Caco-2 (cell line): ENCODE measurements at regions of chr19 and their contacts with region 1.

Region 1: DNA sequence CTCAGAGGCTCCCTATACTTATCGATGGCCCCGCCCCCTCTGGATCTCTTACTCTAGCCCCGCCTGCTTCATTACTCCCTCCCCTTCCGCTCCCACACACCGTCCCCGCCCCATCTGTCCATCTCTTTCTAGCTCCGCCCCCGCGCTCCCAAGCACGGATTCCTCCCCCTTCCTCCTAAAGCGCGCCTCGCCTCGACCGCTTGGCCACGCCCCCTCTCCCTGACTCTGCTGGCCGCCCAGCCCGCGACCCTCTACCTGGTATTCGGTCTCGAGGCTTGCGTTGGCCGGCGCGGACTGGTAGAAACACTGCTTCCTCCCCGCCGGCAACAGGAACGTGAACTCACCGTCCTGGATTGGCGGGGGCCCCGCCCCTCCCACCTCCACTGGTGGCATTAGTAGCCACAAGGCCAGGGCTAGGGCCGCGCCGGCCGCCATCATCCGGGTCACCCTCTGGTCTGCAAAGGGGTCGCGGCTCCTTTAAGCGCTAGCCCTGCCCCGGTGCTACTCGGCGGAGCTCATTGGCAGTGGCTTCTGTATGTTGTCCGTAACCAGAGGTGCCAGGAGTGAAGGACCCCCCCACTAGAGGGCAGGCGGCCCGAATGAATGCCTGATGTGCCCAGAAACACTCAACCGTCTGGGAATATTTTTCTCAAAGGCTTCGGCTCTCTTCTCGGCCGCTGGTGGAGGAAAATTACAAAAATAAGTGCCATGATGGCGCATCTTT is at the start of gene TMED1:
- DNase-seq: peak; percentile 99 to 100
- H3K4me3 ChIP-seq: peak within 1 kb of the TSS; percentile 58
- H3K4me3 Mint-ChIP-seq: peak within 1 kb of the TSS; percentile 98
- H3K27ac Mint-ChIP-seq: peak within 1 kb of the TSS; percentile 100
- H3K4me1 ChIP-seq: peaks cover 9% of the 10 kb centered on the region; the same call in 1 of the 2 replicates
- H3K4me1 Mint-ChIP-seq: no peaks in the 10 kb centered on the region
- H3K27me3 ChIP-seq: no peaks in the 10 kb centered on the region
- H3K27me3 Mint-ChIP-seq: no peaks in the 10 kb centered on the region
- CTCF ChIP-seq: peak in 1 of 2 experiments; percentile 13
- total RNA-seq, gene TMED1: 38.2 and 41.4 TPM in 2 replicates

Region 2: GRCh38 chr19:9494096-9494495 is 1341.8 kb before region 1 on chr19:
- CTCF ChIA-PET with region 1: no interaction called
- POLR2A ChIA-PET with region 1: no interaction called
- intact Hi-C with region 1: no loop called
- DNase-seq: no peak
- H3K4me3 ChIP-seq: no peak overlapping the region
- H3K4me3 Mint-ChIP-seq: no peak overlapping the region
- H3K27ac Mint-ChIP-seq: no peak overlapping the region
- H3K4me1 ChIP-seq: no peaks in the 10 kb centered on the region
- H3K4me1 Mint-ChIP-seq: no peaks in the 10 kb centered on the region
- H3K27me3 ChIP-seq: no peaks in the 10 kb centered on the region
- H3K27me3 Mint-ChIP-seq: no peaks in the 10 kb centered on the region
- CTCF ChIP-seq: no peak

Region 3: GRCh38 chr19:10184636-10185035 is 651.3 kb before region 1 on chr19:
- CTCF ChIA-PET with region 1: no interaction called
- POLR2A ChIA-PET with region 1: no interaction called
- intact Hi-C with region 1: no loop called
- DNase-seq: peak; percentile 32 to 67
- H3K4me3 ChIP-seq: no peak overlapping the region
- H3K4me3 Mint-ChIP-seq: no peak overlapping the region
- H3K27ac Mint-ChIP-seq: peak overlapping the region; percentile 40
- H3K4me1 ChIP-seq: no peaks in the 10 kb centered on the region
- H3K4me1 Mint-ChIP-seq: no peaks in the 10 kb centered on the region
- H3K27me3 ChIP-seq: no peaks in the 10 kb centered on the region
- H3K27me3 Mint-ChIP-seq: no peaks in the 10 kb centered on the region
- CTCF ChIP-seq: no peak

Region 4: DNA sequence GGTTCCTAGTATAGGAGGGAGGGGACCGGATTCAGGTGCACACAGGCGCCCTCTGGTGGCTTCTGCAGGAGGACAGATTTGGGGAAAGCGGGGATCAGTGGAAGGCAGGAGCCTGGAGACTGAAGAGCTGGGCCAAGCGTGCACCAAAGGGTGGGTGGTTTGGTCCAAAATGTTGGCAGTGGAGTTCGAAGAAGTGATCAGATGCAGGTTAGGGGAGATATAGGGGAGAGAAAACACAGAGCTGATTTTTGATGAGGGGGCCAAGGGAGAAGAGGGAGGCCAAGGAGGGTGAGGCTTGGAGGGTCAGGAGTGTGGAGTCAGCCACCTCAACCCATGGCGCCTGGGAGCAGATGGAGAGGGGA is 28.6 kb after region 1 on chr19:
- CTCF ChIA-PET with region 1: interaction called, 26 read pairs
- POLR2A ChIA-PET with region 1: interaction called, 13 read pairs
- intact Hi-C with region 1: no loop called
- DNase-seq: peak; percentile 82 to 86
- H3K4me3 ChIP-seq: no peak overlapping the region
- H3K4me3 Mint-ChIP-seq: peak overlapping the region; percentile 0
- H3K27ac Mint-ChIP-seq: peak overlapping the region; percentile 13
- H3K4me1 ChIP-seq: peaks cover 11% of the 10 kb centered on the region; the same call in 1 of the 2 replicates
- H3K4me1 Mint-ChIP-seq: peaks cover 8% of the 10 kb centered on the region
- H3K27me3 ChIP-seq: no peaks in the 10 kb centered on the region
- H3K27me3 Mint-ChIP-seq: no peaks in the 10 kb centered on the region
- CTCF ChIP-seq: peak; percentile 79 to 93

Region 5: GRCh38 chr19:10870955-10871603 is 35.2 kb after region 1 on chr19 and contains the start of gene CARM1:
- CTCF ChIA-PET with region 1: interaction called, 10 read pairs
- POLR2A ChIA-PET with region 1: interaction called, 3 read pairs
- intact Hi-C with region 1: loop called (anchors 1 kb)
- DNase-seq: peak; percentile 98 to 99
- H3K4me3 ChIP-seq: peak within 1 kb of the TSS; percentile 70
- H3K4me3 Mint-ChIP-seq: peak within 1 kb of the TSS; percentile 92
- H3K27ac Mint-ChIP-seq: peak within 1 kb of the TSS; percentile 88
- H3K4me1 ChIP-seq: peaks cover 22% of the 10 kb centered on the region
- H3K4me1 Mint-ChIP-seq: no peaks in the 10 kb centered on the region
- H3K27me3 ChIP-seq: no peaks in the 10 kb centered on the region
- H3K27me3 Mint-ChIP-seq: no peaks in the 10 kb centered on the region
- CTCF ChIP-seq: peak; percentile 32 to 51
- total RNA-seq, gene CARM1: 97.9 and 98.4 TPM in 2 replicates